ENCODE measurements at regions of chr6 and their contacts with region 1.

Region 1: DNA sequence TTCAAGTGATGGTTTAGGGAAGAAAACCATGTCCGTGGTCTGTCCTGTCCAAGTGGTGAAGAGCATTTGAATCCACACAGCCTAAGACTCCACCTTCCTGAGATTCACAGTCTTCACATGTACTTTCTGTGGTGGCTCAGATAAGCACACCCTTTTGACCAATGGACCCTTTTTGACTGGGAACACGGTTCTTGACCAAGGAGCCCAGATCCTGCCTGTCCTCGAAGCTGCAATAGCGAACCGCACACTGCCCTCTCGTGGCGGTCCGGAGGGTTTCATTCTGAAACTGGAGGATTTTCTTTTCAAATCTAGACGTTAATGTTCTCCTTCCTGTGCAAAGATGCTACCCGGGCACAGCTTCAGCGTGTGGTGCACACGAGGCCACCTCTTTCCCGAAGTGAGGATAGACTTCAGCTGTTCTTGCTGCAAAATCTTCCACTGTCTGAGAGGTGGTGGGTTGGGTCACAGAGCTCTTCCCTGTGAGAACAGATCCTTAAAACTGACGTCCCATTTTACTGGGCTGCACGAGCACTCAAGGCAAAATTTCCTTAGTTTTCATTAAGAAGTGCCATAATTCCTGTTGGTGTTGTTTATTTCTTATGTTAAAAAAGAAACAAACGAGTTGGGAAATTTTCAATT is 90.5 kb downstream of the SYNJ2 start:
- DNase-seq: peak; percentile 79
- H3K4me3 Mint-ChIP-seq: no peak overlapping the region
- H3K27ac Mint-ChIP-seq: no peak overlapping the region
- H3K4me1 Mint-ChIP-seq: peaks cover 28% of the 10 kb centered on the region
- H3K27me3 Mint-ChIP-seq: no peaks in the 10 kb centered on the region

Region 2: DNA sequence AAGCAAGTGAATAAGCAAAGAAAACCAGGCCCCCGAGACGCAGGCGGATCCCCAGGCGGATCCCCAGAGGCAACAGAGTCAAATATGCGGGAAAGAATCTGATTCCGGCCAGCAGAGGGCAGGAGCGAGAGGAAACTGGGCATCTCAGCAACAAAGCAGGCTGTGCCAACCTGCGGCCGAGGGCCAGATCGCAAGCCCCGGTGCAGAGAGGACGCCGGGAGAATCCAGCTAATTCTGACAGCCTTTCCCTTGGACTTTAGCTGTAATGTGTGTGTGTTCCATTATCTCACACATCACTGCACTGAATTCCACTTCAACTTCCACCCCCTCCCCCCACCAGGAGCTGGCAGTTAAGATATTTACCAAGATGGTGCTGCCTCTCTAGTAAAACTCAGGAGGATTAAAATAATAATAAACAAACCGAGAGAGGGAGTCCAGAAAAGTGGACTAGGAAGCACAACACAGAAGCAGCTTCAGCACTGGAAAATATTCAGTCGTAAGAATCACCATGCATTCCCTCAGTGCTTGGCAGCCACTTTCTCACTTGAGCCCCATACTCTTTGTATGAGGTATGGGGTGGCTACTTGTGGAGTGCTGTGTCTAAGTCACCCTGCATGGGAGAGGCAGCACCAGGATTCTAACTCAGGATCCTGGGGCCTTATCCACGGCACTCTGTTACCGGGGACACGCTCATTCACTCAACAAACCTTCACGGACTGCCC is 315.3 kb before region 1 on chr6:
- CTCF ChIA-PET with region 1: interaction called, 25 read pairs
- DNase-seq: peak; percentile 88
- H3K4me3 Mint-ChIP-seq: no peak overlapping the region
- H3K27ac Mint-ChIP-seq: no peak overlapping the region
- H3K4me1 Mint-ChIP-seq: peaks cover 74% of the 10 kb centered on the region
- H3K27me3 Mint-ChIP-seq: peaks cover 82% of the 10 kb centered on the region

Region 3: DNA sequence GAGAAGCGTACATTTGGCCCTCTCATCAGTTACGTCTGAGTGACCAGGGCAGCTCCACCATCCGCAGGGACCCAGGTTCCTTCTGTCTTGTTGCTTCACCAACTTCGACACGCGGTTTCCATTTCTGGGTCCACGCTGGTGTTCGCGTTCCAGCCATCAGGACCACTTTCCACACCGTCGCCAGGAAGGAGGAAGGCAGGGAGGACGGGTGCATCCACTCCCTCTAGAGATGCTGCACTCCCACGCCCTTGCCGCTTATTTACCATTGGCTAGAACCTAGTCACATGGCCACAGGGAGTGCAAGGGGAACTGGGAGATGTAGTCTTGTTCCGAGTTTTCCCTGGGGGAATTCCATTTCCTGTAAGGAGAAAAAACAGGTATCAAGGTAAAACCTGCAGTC is 282.3 kb before region 1 on chr6:
- CTCF ChIA-PET with region 1: no interaction called
- DNase-seq: no peak
- H3K4me3 Mint-ChIP-seq: no peak overlapping the region
- H3K27ac Mint-ChIP-seq: no peak overlapping the region
- H3K4me1 Mint-ChIP-seq: peaks cover 5% of the 10 kb centered on the region
- H3K27me3 Mint-ChIP-seq: peaks cover 51% of the 10 kb centered on the region

Region 4: DNA sequence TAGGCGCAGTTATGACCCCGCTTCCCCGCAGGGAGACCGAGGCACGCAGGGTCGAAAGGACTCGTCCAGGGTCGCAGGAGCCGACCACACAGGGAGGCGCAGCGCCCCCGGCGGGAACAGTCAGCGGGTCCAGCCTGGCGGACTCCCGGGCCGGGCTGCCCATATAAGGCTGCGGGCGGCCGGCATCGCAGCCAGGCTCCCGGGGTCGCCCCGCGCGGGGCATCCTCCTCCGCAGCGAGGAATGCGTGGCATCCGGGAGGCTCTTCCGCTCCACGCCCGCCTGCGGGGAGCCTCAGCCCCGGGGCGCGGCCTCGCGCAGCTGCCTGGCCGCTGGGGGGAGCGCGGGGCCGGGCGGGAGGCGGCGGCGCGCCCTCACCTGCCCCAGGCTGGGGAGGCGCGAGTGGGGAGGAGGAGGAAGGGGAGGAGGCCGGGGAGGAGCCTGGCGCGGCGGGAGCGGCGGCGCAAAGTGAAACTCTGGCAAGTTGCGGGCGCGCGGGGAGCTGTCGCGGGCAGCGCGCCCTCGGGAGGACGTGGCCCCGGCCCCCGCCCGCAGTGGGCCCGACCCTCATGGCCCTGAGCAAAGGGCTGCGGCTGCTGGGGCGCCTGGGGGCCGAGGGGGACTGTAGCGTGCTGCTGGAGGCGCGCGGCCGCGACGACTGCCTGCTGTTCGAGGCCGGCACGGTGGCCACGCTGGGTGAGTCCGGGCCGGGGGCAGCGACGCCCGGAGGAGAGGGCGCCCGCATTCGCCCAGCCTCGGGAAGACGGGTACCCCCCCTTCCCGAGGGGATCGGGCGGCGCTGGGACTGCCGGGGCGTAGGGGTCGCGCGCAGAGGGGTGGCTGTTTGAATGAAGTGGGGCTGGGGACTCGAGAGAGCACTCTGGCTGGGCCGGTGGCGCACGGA is 90.6 kb before region 1 on chr6 and contains the start of gene SYNJ2:
- CTCF ChIA-PET with region 1: interaction called, 13 read pairs
- DNase-seq: peak; percentile 92
- H3K4me3 Mint-ChIP-seq: peak within 1 kb of the TSS; percentile 94
- H3K27ac Mint-ChIP-seq: peak within 1 kb of the TSS; percentile 88
- H3K4me1 Mint-ChIP-seq: peaks cover 65% of the 10 kb centered on the region
- H3K27me3 Mint-ChIP-seq: peaks cover 44% of the 10 kb centered on the region

Region 5: GRCh38 chr6:158047127-158047518 is 25.1 kb before region 1 on chr6:
- CTCF ChIA-PET with region 1: interaction called, 15 read pairs
- DNase-seq: peak; percentile 58
- H3K4me3 Mint-ChIP-seq: no peak overlapping the region
- H3K27ac Mint-ChIP-seq: peak overlapping the region; percentile 58
- H3K4me1 Mint-ChIP-seq: peaks cover 24% of the 10 kb centered on the region
- H3K27me3 Mint-ChIP-seq: no peaks in the 10 kb centered on the region

Region 6: DNA sequence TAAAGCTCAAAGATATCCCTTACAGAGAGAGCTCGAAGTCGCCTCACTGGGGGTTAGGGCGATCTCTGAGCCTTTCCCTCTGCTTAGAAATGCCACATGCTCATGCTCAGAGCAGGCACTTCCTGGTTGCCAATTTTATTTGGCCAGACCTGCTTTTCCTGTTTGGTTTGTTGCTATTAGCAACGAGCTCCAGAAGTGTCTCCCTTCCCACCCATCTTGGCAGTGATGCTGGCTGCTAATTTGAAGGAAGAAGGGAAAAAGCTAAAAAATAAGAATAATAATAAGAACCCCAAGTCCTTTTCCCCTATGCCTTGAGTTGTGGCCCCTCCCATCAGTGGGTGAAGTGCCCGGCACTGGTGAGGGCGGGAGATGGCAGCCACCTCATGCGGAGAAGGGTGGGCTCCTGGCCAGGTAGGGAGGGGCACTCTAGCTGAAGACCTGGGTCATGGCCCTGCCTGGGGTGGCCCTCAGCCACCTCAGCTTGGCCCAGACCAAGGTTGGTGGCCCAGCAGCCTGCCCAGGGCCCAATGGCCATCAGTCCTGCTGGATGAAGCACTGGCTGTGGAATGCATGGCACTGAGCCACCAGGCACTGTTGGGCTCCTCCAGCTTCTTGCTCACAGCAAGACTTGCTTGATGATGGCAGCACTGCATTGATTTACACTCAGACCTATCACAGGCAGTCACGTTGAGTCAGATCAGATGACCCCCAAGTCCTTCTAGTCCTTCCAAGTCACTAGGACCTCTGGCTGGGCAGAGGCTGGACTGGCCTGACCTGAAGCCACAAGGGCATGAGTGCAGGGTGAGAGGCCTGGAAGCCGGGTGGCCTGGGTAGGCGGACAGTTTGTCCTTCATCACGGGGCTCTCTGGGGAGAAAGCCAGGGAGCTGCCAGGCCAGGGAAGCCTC is 11.5 kb before region 1 on chr6:
- CTCF ChIA-PET with region 1: interaction called, 16 read pairs
- DNase-seq: no peak
- H3K4me3 Mint-ChIP-seq: no peak overlapping the region
- H3K27ac Mint-ChIP-seq: no peak overlapping the region
- H3K4me1 Mint-ChIP-seq: peaks cover 33% of the 10 kb centered on the region
- H3K27me3 Mint-ChIP-seq: no peaks in the 10 kb centered on the region